Colonic mucosa (tissue), 4 donors: ENCODE measurements at regions of chr4 and their contacts with region 1.

Region 1: GRCh38 chr4:165327211-165328100 is at the start of gene MSMO1:
- DNase-seq: peak; percentile 98
- H3K4me3 ChIP-seq: peak within 1 kb of the TSS; percentile 93
- H3K27ac ChIP-seq: peak within 1 kb of the TSS; percentile 91
- H3K4me1 ChIP-seq: no peaks in the 10 kb centered on the region
- H3K27me3 ChIP-seq: no peaks in the 10 kb centered on the region
- CTCF ChIP-seq: no peak
- total RNA-seq, gene MSMO1: 51.7 to 290 TPM

Region 2: DNA sequence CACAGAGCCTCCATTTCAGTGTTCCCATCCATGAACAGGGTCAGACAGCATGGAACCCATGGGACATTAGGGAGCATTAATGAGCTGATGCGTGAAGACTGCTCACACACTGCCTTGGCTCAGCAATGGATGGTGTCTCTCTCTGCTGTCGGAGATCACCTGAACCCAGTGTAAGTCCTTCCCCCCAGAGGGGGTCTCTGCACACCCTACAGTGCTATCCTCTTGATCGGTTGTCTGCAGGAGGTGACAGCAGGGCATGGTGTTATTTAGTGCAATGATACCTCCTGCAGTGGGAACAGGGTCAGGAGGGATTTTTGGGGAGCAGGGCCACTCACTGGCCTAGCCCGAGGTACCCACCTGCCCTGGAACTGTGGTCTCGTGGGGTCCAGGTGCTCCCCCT is 424.8 kb before region 1 on chr4:
- intact Hi-C with region 1: no loop called
- DNase-seq: no peak
- H3K4me3 ChIP-seq: no peak overlapping the region
- H3K27ac ChIP-seq: no peak overlapping the region
- H3K4me1 ChIP-seq: no peaks in the 10 kb centered on the region
- H3K27me3 ChIP-seq: no peaks in the 10 kb centered on the region
- CTCF ChIP-seq: no peak

Region 3: DNA sequence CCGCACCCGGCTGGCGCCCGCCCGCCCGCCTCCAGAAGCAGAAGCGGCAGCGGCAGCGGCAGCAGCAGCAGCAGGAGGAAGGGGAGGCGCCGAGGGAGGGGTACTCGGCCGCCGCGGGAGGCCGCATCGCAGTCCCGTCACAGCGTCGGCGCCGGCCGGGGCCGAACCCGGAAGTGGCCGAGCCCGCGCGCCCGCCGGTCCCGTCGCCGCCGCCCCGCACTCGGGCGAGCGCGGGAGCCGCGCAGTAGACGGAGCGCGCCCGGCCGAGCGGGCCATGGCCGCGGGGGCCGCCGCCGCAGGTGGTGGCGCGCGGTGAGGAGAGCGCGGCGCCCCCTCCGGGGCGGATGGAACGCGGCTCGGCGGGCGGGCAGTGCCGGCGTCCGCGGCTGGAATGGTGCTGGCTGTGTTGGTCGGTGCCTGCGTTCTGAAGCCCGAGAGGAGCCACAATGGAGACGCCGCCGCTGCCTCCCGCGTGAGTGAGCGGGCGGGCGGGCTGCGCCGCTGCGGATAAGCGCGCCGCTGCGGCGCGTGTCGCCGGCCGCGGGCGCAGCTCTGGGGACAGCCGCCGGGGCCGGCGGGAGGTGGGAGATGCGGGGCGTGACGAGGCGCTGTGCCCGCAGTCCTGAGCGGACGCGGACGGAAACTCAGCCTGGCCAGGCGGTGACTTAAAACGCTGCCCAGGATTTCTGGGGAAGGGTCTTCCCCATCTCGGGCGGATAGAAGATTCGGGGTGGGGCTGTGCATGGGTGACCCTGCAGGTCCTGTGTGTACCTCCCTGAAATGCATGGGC is 119.8 kb before region 1 on chr4 and contains the start of gene KLHL2:
- intact Hi-C with region 1: loop called (anchors 10 kb)
- DNase-seq: peak; percentile 69
- H3K4me3 ChIP-seq: peak within 1 kb of the TSS; percentile 63
- H3K27ac ChIP-seq: peak within 1 kb of the TSS; percentile 77
- H3K4me1 ChIP-seq: no peaks in the 10 kb centered on the region
- H3K27me3 ChIP-seq: no peaks in the 10 kb centered on the region
- CTCF ChIP-seq: no peak
- total RNA-seq, gene KLHL2: 8.6 to 11.1 TPM